ENCODE measurements at regions of chr2 and their contacts with region 1.

Region 1: DNA sequence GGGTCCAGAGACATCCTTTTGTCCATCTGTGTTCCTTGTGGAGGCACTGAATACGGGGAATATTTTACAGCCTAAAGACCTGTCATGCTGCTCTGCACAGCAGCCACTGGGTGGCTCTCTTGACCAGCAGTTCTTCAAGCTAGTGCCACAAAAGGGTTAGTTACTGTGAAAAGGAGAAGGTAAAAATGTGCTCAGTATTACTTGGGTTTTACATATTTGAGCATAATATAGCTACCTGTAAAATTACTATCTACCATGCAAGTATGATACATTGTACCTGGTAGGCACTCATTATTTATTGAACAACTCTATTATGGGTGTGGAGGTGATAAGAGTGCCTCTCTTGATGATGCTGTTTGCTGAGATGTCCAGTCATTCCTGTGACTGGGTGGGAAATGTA is 23.6 kb downstream of the FZD5 start:
- DNase-seq: no peak
- ATAC-seq: peak; percentile 79

Region 2: GRCh38 chr2:207974216-207974605 is 228.1 kb after region 1 on chr2:
- intact Hi-C with region 1: loop called (anchors 5 kb)
- DNase-seq: no peak
- ATAC-seq: no peak

Region 3: GRCh38 chr2:208039376-208040110 is 293.4 kb after region 1 on chr2:
- intact Hi-C with region 1: loop called (anchors 5 kb)
- DNase-seq: no peak
- ATAC-seq: no peak

Region 4: GRCh38 chr2:208072250-208072892 is 326.2 kb after region 1 on chr2:
- intact Hi-C with region 1: loop called (anchors 5 kb)
- DNase-seq: no peak
- ATAC-seq: peak; percentile 71